CD8-positive, alpha-beta memory T cell (primary cell): ENCODE measurements at regions of chr2 and their contacts with region 1.

Region 1: DNA sequence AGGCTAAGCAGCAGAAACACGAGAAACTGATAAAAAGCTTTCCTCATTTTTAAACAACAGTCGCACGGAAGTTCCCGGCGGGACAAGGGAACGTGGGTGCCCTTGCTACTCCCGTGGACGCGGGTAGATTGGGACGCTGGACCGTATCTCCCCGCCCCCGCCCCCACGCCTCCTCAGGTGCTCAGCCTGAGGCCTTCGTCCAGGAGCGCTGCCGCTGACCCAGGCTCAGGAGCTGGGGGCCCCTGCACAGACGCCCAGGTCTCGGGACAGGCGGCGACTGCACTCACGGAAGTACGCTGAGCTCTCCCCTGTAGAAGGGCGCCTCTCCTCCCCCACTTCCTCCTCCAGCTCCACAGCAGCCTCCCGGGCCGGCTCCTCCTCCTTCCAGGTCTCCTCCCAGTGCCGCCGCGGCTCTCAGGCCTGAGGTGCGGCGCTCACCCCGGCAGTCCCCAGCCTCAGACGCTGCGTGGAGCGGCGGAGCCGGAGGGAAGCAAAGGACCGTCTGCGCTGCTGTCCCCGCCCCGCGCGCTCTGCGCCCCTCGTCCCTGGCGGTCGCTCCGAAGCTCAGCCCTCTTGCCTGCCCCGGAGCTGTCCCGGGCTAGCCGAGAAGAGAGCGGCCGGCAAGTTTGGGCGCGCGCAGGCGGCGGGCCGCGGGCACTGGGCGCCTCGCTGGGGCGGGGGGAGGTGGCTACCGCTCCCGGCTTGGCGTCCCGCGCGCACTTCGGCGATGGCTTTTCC is at the start of gene ITGAV:
- DNase-seq: peak; percentile 68 to 88 (median 77)
- H3K4me3 ChIP-seq: peak within 1 kb of the TSS; percentile 90
- H3K4me3 Mint-ChIP-seq: peak within 1 kb of the TSS; percentile 85 to 97 (median 91)
- H3K27ac ChIP-seq: peak within 1 kb of the TSS; percentile 76
- H3K27ac Mint-ChIP-seq: peak within 1 kb of the TSS; percentile 82 to 98 (median 89)
- H3K4me1 ChIP-seq: peaks cover 15% of the 10 kb centered on the region
- H3K4me1 Mint-ChIP-seq: peaks cover 34 to 41% (median 39%) of the 10 kb centered on the region in 3 donors
- H3K27me3 ChIP-seq: no peaks in the 10 kb centered on the region
- H3K27me3 Mint-ChIP-seq: no peaks in the 10 kb centered on the region
- total RNA-seq, gene ITGAV: 8.7 to 10.7 TPM

Region 2: GRCh38 chr2:186485871-186486650 is 103.7 kb before region 1 on chr2 and contains the start of gene ZC3H15:
- CTCF ChIA-PET with region 1: no interaction called
- POLR2A ChIA-PET with region 1: interaction called, 28 read pairs
- DNase-seq: peak; percentile 95 to 98 (median 96)
- H3K4me3 ChIP-seq: peak within 1 kb of the TSS; percentile 97
- H3K4me3 Mint-ChIP-seq: peak within 1 kb of the TSS; percentile 97 to 99 (median 98)
- H3K27ac ChIP-seq: peak within 1 kb of the TSS; percentile 99
- H3K27ac Mint-ChIP-seq: peak within 1 kb of the TSS; percentile 97 to 100 (median 100)
- H3K4me1 ChIP-seq: peaks cover 60% of the 10 kb centered on the region
- H3K4me1 Mint-ChIP-seq: peaks cover 55 to 65% (median 58%) of the 10 kb centered on the region in 3 donors
- H3K27me3 ChIP-seq: no peaks in the 10 kb centered on the region
- H3K27me3 Mint-ChIP-seq: peaks cover 0 to 5% of the 10 kb centered on the region in 2 donors
- total RNA-seq, gene ZC3H15: 101 to 104 TPM